AG04450 (cell line): ENCODE measurements at regions of chr15 and their contacts with region 1.

Region 1: GRCh38 chr15:82046666-82047452 is 1.0 kb upstream of the MEX3B start:
- DNase-seq: peak; percentile 86
- H3K4me3 ChIP-seq: peak overlapping the region; percentile 89
- H3K27ac ChIP-seq: peak overlapping the region; percentile 98
- H3K27me3 ChIP-seq: no peaks in the 10 kb centered on the region
- CTCF ChIP-seq: peak; percentile 77

Region 2: DNA sequence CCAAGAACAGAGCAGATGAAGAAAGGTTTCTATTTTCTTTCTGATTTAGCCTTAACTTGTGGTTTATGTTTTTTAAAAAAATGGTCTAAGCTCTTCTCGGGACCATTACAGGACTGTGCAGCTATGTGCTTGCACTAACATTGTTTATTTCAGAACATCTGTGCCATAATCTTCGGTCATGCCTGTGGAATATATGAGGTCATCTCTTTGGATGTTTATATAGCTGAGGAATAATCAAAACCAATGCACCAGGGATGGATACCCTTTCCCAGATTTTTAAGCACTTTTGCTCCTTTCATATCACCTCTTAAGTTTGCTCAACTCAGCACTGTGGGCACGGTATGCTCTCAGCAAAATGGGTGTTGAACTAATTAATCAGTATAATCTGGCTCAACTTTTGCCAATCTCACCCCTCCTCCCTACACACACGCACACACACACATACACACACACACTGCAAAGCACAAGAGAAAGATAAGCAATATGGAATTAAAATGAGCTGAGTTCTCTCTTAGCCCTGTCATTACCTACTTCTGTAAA is 404.3 kb before region 1 on chr15:
- CTCF ChIA-PET with region 1: no interaction called
- POLR2A ChIA-PET with region 1: interaction called, 12 read pairs
- DNase-seq: peak; percentile 93
- H3K4me3 ChIP-seq: no peak overlapping the region
- H3K27ac ChIP-seq: peak overlapping the region; percentile 97
- H3K27me3 ChIP-seq: no peaks in the 10 kb centered on the region
- CTCF ChIP-seq: no peak